Activated T-helper 1 cell treated with anti-CD3 and anti-CD28 coated beads, Interleukin-12 subunit alpha, Interleukin-12 subunit beta, Interleukin-2, Interleukin-4 antibody, amounts not matched to agents 30 ng/mL and 10 ng/mL and 1 ng/mL, durations not matched to agents 14 hours and 24 hours and 36 hours (primary cell): ENCODE measurements at regions of chr10 and their contacts with region 1.

Region 1: GRCh38 chr10:118007773-118008172 is 39.0 kb downstream of the RAB11FIP2 start:
- DNase-seq: no peak
- H3K4me3 Mint-ChIP-seq: no peak overlapping the region
- H3K27ac Mint-ChIP-seq: no peak overlapping the region
- H3K4me1 Mint-ChIP-seq: peaks cover 9% of the 10 kb centered on the region
- H3K27me3 Mint-ChIP-seq: no peaks in the 10 kb centered on the region

Region 2: GRCh38 chr10:117720931-117721835 is 286.6 kb before region 1 on chr10:
- intact Hi-C with region 1: no loop called
- DNase-seq: no peak
- H3K4me3 Mint-ChIP-seq: no peak overlapping the region
- H3K27ac Mint-ChIP-seq: no peak overlapping the region
- H3K4me1 Mint-ChIP-seq: no peaks in the 10 kb centered on the region
- H3K27me3 Mint-ChIP-seq: peaks cover 8% of the 10 kb centered on the region

Region 3: DNA sequence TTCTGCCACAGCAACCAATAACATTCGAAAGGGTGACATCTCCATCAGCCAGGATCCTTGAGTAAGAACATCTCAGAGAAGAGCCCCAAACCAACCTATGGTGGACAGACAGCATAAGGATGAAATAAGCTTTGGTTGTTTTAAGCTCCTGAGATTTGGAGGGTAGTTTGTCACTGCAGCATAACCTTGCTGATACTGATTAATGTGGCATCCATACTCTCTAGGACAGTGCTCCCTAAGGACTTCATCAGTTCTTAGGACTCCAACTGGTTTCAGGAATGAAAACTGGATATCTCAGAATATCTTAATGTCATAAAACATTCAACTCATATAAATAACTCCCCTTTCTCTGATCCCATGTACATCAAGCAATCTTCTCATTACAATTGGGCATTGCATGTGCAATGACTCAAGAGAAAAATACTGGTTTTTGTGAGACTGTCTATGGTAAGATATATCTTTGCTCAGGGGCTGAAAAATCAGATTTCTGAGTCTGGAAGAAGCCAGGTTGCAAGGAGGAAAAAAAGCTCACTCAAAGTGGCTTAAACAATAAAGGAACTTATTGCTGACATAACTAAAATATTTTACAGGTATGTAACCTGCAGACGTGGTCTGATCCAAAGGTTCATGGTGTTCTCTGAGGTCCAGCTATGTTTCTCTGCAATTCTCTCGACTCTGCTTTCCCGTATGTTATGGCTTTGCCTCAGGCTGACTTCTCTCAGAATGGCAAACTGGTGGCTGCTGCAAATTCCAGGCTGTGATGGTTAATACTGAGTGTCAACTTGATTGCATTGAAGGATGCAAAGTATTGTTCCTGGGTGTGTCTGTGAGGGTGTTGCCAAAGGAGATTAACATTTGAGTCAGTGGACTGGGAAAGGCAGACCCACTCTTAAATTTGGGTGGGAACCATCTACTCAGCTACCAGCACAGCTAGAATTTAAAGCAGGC is 26.7 kb before region 1 on chr10:
- intact Hi-C with region 1: loop called (anchors 1 kb)
- DNase-seq: no peak
- H3K4me3 Mint-ChIP-seq: no peak overlapping the region
- H3K27ac Mint-ChIP-seq: no peak overlapping the region
- H3K4me1 Mint-ChIP-seq: no peaks in the 10 kb centered on the region
- H3K27me3 Mint-ChIP-seq: peaks cover 8% of the 10 kb centered on the region